GM10248 (cell line): ENCODE measurements at regions of chr7 and their contacts with region 1.

Region 1: GRCh38 chr7:139725077-139725476 is 52.7 kb downstream of the HIPK2 start:
- DNase-seq: peak; percentile 46
- CTCF ChIP-seq: no peak

Region 2: DNA sequence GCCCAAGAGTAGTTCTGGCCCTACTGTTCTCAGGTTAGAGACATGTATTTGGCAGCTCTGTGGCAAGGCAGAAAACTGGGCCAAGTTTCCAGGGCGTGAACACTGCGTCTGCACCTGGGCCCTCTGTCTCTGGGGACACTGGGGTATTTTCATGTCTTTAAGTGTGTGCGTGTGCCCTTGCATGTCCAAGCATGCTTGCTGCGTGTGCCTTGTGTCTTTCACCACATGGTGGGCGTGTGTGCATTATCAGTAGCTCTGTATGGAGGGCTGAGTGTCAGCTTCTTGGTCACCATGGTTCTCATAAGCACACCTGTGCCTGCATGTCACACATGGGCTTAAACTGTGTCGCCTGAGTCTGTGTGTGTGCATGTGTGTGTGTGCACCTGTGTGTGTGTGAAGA is 16.5 kb before region 1 on chr7:
- CTCF ChIA-PET with region 1: interaction called, 16 read pairs
- POLR2A ChIA-PET with region 1: interaction called, 8 read pairs
- DNase-seq: peak; percentile 64
- CTCF ChIP-seq: peak; percentile 6